WTC11 (cell line): ENCODE measurements at regions of chr16 and their contacts with region 1.

Region 1: DNA sequence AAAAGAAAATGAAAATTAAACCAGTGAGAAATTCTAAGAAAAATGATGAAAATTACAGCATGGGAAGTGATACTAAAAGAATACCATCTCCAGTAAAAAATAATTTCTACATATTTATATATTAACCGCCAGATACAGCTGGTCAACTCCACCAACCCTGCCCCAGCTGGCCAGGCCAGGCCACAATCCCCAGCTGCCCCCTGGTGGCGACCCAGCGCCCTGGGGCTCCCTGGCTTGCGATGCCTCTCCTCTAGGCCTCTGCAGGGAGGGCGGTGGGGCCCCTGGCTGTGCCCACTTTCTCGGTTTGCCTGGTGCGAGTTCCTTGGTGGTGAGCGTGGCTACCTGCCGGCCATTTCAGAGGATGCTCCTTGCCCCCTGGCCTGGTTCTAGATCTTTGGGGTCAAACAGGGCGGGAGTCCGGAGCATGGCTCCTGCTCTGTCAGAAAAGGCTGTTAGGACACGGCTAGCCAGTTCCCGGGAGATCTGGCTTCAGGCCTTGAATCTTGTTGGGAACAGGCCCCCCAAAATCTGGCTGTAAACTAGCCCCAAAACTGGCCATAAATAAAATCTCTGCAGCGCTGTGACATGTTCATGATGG is 14.5 kb downstream of the GLIS2 start:
- DNase-seq: peak; percentile 86
- ATAC-seq: peak; percentile 27
- H3K4me3 Mint-ChIP-seq: no peak overlapping the region
- H3K27ac Mint-ChIP-seq: no peak overlapping the region
- H3K4me1 Mint-ChIP-seq: peaks cover 18% of the 10 kb centered on the region
- H3K27me3 Mint-ChIP-seq: no peaks in the 10 kb centered on the region
- CTCF ChIP-seq: peak; percentile 93

Region 2: GRCh38 chr16:3890091-3890490 is 440.3 kb before region 1 on chr16:
- CTCF ChIA-PET with region 1: no interaction called
- POLR2A ChIA-PET with region 1: no interaction called
- DNase-seq: no peak
- ATAC-seq: no peak
- H3K4me3 Mint-ChIP-seq: no peak overlapping the region
- H3K27ac Mint-ChIP-seq: no peak overlapping the region
- H3K4me1 Mint-ChIP-seq: no peaks in the 10 kb centered on the region
- H3K27me3 Mint-ChIP-seq: peaks cover 5% of the 10 kb centered on the region; the same call in 1 of the 2 replicates
- CTCF ChIP-seq: no peak

Region 3: DNA sequence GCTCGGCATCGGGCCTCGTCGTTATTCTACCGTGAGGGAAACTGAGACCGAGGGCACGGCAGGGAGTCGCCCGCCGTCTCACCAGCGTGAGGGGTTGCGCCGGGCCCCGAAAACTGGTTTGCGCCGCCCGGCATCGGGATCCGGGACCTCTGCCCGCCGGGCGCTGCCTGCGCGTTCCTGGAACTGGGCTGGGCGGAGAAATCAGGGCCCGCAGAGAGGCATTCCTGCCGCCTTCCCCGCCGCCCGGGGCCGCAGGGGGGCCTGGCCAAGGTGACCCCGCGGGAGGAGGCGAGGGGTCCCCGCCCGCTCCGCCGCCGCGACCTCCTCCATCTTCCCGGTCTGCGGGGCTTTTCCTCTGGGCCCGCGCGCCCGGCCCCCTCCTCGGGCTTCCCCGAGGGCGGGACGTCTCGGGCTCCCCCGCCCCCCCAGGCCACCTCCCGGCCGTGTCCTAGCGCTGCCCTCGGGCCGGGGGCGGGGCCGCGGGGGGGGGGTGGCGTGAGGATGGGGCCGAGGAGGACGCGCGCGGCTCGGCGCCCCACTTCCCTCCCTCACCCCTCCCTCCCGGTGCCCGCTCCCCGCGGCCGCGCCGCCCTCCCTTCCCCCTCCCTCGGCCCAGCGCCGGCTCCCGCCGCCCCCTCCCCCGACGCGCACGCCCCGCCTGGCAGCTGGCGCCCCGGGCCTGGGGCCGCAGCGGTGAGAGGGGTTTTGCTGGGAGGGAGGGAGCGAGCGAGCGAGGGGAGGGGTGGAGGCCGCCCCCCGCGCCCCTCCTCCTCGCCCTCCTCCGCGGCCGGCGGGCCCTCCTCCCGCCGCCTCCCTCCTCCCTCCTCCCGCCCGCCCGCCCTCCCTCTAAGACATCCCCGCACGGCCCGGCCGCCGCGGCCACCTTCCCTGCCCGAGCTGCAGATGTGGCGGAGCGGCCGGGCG is 14.9 kb before region 1 on chr16 and contains the start of gene GLIS2:
- CTCF ChIA-PET with region 1: interaction called, 122 read pairs
- POLR2A ChIA-PET with region 1: interaction called, 14 read pairs
- DNase-seq: peak; percentile 82
- ATAC-seq: peak; percentile 44
- H3K4me3 Mint-ChIP-seq: peak within 1 kb of the TSS; percentile 88
- H3K27ac Mint-ChIP-seq: no peak within 1 kb of the TSS
- H3K4me1 Mint-ChIP-seq: peaks cover 30% of the 10 kb centered on the region
- H3K27me3 Mint-ChIP-seq: peaks cover 13% of the 10 kb centered on the region
- CTCF ChIP-seq: no peak
- total RNA-seq, gene GLIS2: 19.5 to 23.0 TPM (median 20.1 TPM) in 3 replicates